A673 (cell line): ENCODE measurements at regions of chr4 and their contacts with region 1.

Region 1: GRCh38 chr4:156169011-156169410 is 215.3 kb upstream of the CTSO start:
- DNase-seq: peak; percentile 85
- H3K4me3 ChIP-seq: no peak overlapping the region
- H3K27ac ChIP-seq: no peak overlapping the region
- H3K4me1 ChIP-seq: peaks cover 15% of the 10 kb centered on the region
- H3K27me3 ChIP-seq: no peaks in the 10 kb centered on the region
- CTCF ChIP-seq: peak; percentile 77

Region 2: DNA sequence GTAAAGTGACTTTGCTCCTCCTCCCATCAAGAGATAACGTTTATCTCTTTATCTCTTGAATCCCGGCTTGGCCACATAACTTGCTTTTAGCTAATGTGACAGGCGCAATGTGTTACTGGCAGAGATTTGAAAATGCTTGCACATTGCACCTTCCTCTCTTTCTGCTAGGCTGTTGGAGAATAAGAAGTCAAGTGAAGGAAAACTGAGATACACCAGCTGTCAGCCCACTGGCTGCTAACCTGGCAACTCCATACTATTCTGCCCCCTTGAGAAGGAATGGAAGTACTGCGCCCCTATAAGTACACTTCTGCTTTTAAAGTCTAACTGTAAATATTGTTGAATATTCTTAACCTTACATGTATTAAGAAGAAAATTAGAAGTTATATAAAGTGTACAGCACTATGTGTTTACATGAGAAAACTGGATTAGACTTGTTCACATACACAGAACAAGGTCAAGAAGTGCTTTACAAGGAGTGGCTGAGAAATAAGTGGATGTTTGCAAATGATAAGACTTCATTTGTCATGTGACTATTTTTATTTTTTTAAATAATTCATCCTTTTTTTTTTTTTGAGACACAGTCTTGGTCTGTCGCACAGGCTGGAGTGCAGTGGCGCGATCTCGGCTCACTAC is 209.1 kb after region 1 on chr4:
- CTCF ChIA-PET with region 1: no interaction called
- POLR2A ChIA-PET with region 1: no interaction called
- intact Hi-C with region 1: loop called (anchors 2 kb)
- DNase-seq: peak; percentile 81
- H3K4me3 ChIP-seq: no peak overlapping the region
- H3K27ac ChIP-seq: no peak overlapping the region
- H3K4me1 ChIP-seq: peaks cover 7% of the 10 kb centered on the region
- H3K27me3 ChIP-seq: no peaks in the 10 kb centered on the region
- CTCF ChIP-seq: peak; percentile 87

Region 3: DNA sequence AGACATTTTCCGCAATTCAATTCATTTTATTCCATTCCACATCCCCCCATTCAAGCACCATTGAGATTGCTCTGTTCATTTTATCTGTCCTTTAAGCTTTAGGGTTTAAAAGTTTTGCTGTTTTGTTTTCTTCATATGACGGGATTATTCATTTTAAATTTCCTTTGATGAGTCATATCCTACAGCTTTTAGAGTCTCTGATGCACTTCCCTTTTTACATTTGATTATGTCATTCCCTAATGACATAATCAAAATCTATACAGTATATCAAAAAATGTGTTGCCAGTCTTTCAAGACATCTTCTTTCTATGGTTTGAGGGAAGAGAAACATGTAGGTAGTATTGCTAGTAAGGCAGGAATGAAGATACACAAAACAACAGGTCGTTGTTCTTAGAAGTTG is 346.3 kb after region 1 on chr4:
- CTCF ChIA-PET with region 1: no interaction called
- POLR2A ChIA-PET with region 1: no interaction called
- intact Hi-C with region 1: loop called (anchors 2 kb)
- DNase-seq: peak; percentile 62
- H3K4me3 ChIP-seq: no peak overlapping the region
- H3K27ac ChIP-seq: peak overlapping the region; percentile 92
- H3K4me1 ChIP-seq: peaks cover 78% of the 10 kb centered on the region
- H3K27me3 ChIP-seq: no peaks in the 10 kb centered on the region
- CTCF ChIP-seq: no peak

Region 4: GRCh38 chr4:156677131-156677531 is 508.1 kb after region 1 on chr4:
- CTCF ChIA-PET with region 1: no interaction called
- POLR2A ChIA-PET with region 1: no interaction called
- intact Hi-C with region 1: loop called (anchors 10 kb)
- DNase-seq: peak; percentile 45
- H3K4me3 ChIP-seq: no peak overlapping the region
- H3K27ac ChIP-seq: no peak overlapping the region
- H3K4me1 ChIP-seq: peaks cover 12% of the 10 kb centered on the region
- H3K27me3 ChIP-seq: no peaks in the 10 kb centered on the region
- CTCF ChIP-seq: peak; percentile 44

Region 5: GRCh38 chr4:157040405-157040804 is 871.4 kb after region 1 on chr4:
- CTCF ChIA-PET with region 1: interaction called, 5 read pairs
- POLR2A ChIA-PET with region 1: no interaction called
- intact Hi-C with region 1: loop called (anchors 2 kb)
- DNase-seq: no peak
- H3K4me3 ChIP-seq: no peak overlapping the region
- H3K27ac ChIP-seq: no peak overlapping the region
- H3K4me1 ChIP-seq: peaks cover 14% of the 10 kb centered on the region
- H3K27me3 ChIP-seq: no peaks in the 10 kb centered on the region
- CTCF ChIP-seq: no peak

Region 6: DNA sequence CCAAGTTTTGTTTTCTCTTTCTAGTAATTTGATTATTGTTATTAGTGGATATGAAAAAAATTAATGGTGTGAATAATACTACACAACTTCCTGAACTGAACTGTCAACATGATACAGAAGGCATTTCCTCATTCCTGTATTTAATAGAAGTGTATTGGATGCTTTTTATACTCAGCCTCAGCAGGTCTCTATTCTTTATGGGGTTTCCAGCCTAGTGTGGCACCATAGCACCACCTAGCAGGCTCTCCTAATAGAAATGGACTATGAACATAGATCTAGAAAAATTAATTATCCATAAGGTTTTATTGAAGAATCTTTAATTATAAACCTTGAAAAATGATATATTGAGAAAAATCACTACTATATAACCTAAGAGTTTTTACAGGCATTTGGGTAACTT is 959.4 kb after region 1 on chr4:
- CTCF ChIA-PET with region 1: no interaction called
- POLR2A ChIA-PET with region 1: no interaction called
- intact Hi-C with region 1: loop called (anchors 5 kb)
- DNase-seq: peak; percentile 69
- H3K4me3 ChIP-seq: no peak overlapping the region
- H3K27ac ChIP-seq: no peak overlapping the region
- H3K4me1 ChIP-seq: peaks cover 10% of the 10 kb centered on the region
- H3K27me3 ChIP-seq: no peaks in the 10 kb centered on the region
- CTCF ChIP-seq: peak; percentile 67

Region 7: GRCh38 chr4:157978680-157979361 is 1809.8 kb after region 1 on chr4:
- CTCF ChIA-PET with region 1: no interaction called
- POLR2A ChIA-PET with region 1: no interaction called
- intact Hi-C with region 1: loop called (anchors 10 kb)
- DNase-seq: peak; percentile 89
- H3K4me3 ChIP-seq: peak overlapping the region; percentile 23
- H3K27ac ChIP-seq: no peak overlapping the region
- H3K4me1 ChIP-seq: peaks cover 22% of the 10 kb centered on the region
- H3K27me3 ChIP-seq: no peaks in the 10 kb centered on the region
- CTCF ChIP-seq: peak; percentile 85